Left ventricle myocardium inferior (tissue), 1 donor: ENCODE measurements at regions of chr1 and their contacts with region 1.

Region 1: DNA sequence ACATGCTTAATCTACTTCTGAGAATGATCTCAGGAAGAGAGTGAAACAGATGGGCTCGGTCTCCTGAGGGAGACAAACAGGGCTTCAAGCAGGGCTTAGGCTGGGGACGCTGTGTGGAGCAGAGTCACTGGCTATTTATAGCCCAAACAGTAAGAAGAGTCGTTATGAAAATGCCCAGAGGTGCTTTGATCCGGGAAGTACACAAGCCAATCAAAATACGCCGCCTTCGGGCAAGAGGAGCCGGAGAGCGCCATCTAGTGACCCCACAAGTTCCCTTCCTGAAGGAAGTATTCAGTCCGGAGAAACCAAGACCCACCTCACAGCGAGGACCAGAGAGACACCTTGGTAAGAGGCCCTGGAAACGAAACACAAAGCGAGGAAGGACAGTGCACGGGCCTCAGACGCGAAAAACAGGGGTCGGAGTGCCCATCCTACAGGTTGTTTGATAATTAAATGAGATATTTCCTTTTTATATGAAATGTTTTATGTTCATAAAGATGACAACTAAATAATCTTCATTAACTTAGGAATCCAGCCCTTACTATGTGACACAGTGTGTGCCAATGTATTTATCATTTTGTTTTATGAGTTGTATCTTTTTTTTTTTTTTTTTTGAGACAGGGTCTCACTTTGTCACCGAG is 25.0 kb upstream of the SCCPDH start:
- DNase-seq: peak; percentile 87
- H3K4me3 ChIP-seq: peak overlapping the region; percentile 58
- H3K27ac ChIP-seq: peak overlapping the region; percentile 84
- H3K4me1 ChIP-seq: peaks cover 15% of the 10 kb centered on the region
- H3K27me3 ChIP-seq: no peaks in the 10 kb centered on the region
- CTCF ChIP-seq: peak; percentile 91

Region 2: DNA sequence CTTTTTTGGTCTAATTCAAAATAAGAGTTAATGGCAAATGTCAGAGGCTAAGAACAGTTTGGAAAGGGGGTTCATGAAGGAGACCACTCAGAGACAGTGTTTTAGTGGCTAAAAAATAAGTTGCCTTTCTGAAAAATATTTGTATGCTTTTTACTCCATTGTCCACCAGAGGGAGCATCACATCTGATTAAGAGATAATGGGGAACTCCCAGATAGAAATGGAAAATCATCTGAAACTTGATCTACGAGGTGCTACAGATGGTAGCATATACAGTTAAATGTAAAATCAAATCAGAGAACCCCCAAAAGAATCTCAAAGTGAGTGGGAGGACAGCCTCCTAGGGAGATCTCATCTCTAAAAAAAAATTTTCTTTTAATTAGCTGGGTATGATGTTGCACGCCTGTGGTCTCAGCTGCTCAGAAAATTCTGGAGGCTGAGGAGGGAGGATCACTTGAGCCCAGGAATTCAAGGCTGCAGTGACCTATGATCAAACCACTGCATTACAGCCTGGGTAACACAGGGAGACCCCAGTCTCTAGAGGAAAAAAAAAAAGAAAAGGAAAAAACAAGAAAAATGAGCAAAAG is 201.8 kb before region 1 on chr1:
- intact Hi-C with region 1: loop called (anchors 2 kb)
- DNase-seq: no peak
- H3K4me3 ChIP-seq: no peak overlapping the region
- H3K27ac ChIP-seq: no peak overlapping the region
- H3K4me1 ChIP-seq: peaks cover 1% of the 10 kb centered on the region
- H3K27me3 ChIP-seq: no peaks in the 10 kb centered on the region
- CTCF ChIP-seq: peak; percentile 73

Region 3: GRCh38 chr1:246647113-246647512 is 52.1 kb before region 1 on chr1:
- intact Hi-C with region 1: loop called (anchors 10 kb)
- DNase-seq: peak; percentile 74
- H3K4me3 ChIP-seq: peak overlapping the region; percentile 59
- H3K27ac ChIP-seq: peak overlapping the region; percentile 76
- H3K4me1 ChIP-seq: peaks cover 29% of the 10 kb centered on the region
- H3K27me3 ChIP-seq: no peaks in the 10 kb centered on the region
- CTCF ChIP-seq: peak; percentile 77

Region 4: GRCh38 chr1:247471445-247472016 is 772.3 kb after region 1 on chr1:
- intact Hi-C with region 1: no loop called
- DNase-seq: no peak
- H3K4me3 ChIP-seq: no peak overlapping the region
- H3K27ac ChIP-seq: no peak overlapping the region
- H3K4me1 ChIP-seq: no peaks in the 10 kb centered on the region
- H3K27me3 ChIP-seq: no peaks in the 10 kb centered on the region
- CTCF ChIP-seq: no peak